Dendritic cell treated with granulocyte-macrophage colony-stimulating factor and Interleukin-4, amounts not matched to agents 40 ng/mL and 50 ng/mL, for 4 days (primary cell): ENCODE measurements at regions of chr4 and their contacts with region 1.

Region 1: GRCh38 chr4:189792924-189793618 is 147.6 kb upstream of the FRG1 start:
- H3K4me3 Mint-ChIP-seq: peak overlapping the region; percentile 14
- H3K27ac Mint-ChIP-seq: no peak overlapping the region
- H3K4me1 Mint-ChIP-seq: peaks cover 6% of the 10 kb centered on the region
- H3K27me3 Mint-ChIP-seq: no peaks in the 10 kb centered on the region

Region 2: DNA sequence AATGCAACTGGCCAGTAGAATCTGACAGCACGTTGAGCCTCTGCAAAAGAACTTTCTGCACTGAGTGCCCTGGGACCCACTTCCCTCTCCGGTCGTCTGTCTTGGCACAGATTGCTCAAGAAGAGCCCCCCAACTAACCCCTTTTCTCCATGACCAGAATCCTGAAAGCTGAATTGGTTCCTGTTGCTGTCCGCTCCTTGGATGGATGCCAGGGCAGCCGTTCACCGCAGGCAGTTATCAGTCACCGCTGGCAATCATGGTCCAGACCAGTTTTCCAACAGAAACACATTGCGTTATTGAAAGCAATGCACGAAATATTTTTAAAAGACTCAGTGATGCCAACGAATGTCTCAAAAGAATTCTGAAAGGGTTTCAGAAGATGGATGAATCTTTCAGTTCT is 586.1 kb before region 1 on chr4:
- intact Hi-C with region 1: loop called (anchors 5 kb)
- H3K4me3 Mint-ChIP-seq: no peak overlapping the region
- H3K27ac Mint-ChIP-seq: no peak overlapping the region
- H3K4me1 Mint-ChIP-seq: peaks cover 6% of the 10 kb centered on the region
- H3K27me3 Mint-ChIP-seq: no peaks in the 10 kb centered on the region

Region 3: GRCh38 chr4:189385098-189385497 is 408.0 kb before region 1 on chr4:
- intact Hi-C with region 1: no loop called
- H3K4me3 Mint-ChIP-seq: no peak overlapping the region
- H3K27ac Mint-ChIP-seq: no peak overlapping the region
- H3K4me1 Mint-ChIP-seq: no peaks in the 10 kb centered on the region
- H3K27me3 Mint-ChIP-seq: no peaks in the 10 kb centered on the region

Region 4: GRCh38 chr4:189396435-189396834 is 396.6 kb before region 1 on chr4:
- intact Hi-C with region 1: no loop called
- H3K4me3 Mint-ChIP-seq: no peak overlapping the region
- H3K27ac Mint-ChIP-seq: no peak overlapping the region
- H3K4me1 Mint-ChIP-seq: no peaks in the 10 kb centered on the region
- H3K27me3 Mint-ChIP-seq: no peaks in the 10 kb centered on the region

Region 5: GRCh38 chr4:189436207-189436606 is 356.9 kb before region 1 on chr4:
- intact Hi-C with region 1: loop called (anchors 2 kb)
- H3K4me3 Mint-ChIP-seq: no peak overlapping the region
- H3K27ac Mint-ChIP-seq: no peak overlapping the region
- H3K4me1 Mint-ChIP-seq: no peaks in the 10 kb centered on the region
- H3K27me3 Mint-ChIP-seq: no peaks in the 10 kb centered on the region